ENCODE measurements at regions of chr19 and their contacts with region 1.

Region 1: GRCh38 chr19:43526884-43527859 is at the start of gene ETHE1:
- DNase-seq: peak; percentile 83
- H3K4me3 Mint-ChIP-seq: peak within 1 kb of the TSS; percentile 94
- H3K27ac Mint-ChIP-seq: peak within 1 kb of the TSS; percentile 79
- H3K4me1 Mint-ChIP-seq: peaks cover 28% of the 10 kb centered on the region
- H3K27me3 Mint-ChIP-seq: no peaks in the 10 kb centered on the region
- total RNA-seq, gene ETHE1: 90.7 to 91.1 TPM

Region 2: GRCh38 chr19:43300876-43301765 is 226.1 kb before region 1 on chr19:
- CTCF ChIA-PET with region 1: no interaction called
- POLR2A ChIA-PET with region 1: no interaction called
- DNase-seq: no peak
- H3K4me3 Mint-ChIP-seq: no peak overlapping the region
- H3K27ac Mint-ChIP-seq: no peak overlapping the region
- H3K4me1 Mint-ChIP-seq: no peaks in the 10 kb centered on the region
- H3K27me3 Mint-ChIP-seq: no peaks in the 10 kb centered on the region

Region 3: GRCh38 chr19:43425567-43426392 is 101.4 kb before region 1 on chr19:
- CTCF ChIA-PET with region 1: interaction called, 198 read pairs
- POLR2A ChIA-PET with region 1: interaction called, 3 read pairs
- DNase-seq: no peak
- H3K4me3 Mint-ChIP-seq: no peak overlapping the region
- H3K27ac Mint-ChIP-seq: no peak overlapping the region
- H3K4me1 Mint-ChIP-seq: peaks cover 12% of the 10 kb centered on the region
- H3K27me3 Mint-ChIP-seq: peaks cover 2% of the 10 kb centered on the region

Region 4: GRCh38 chr19:43489310-43489709 is 37.9 kb before region 1 on chr19:
- CTCF ChIA-PET with region 1: no interaction called
- POLR2A ChIA-PET with region 1: no interaction called
- DNase-seq: no peak
- H3K4me3 Mint-ChIP-seq: no peak overlapping the region
- H3K27ac Mint-ChIP-seq: no peak overlapping the region
- H3K4me1 Mint-ChIP-seq: no peaks in the 10 kb centered on the region
- H3K27me3 Mint-ChIP-seq: no peaks in the 10 kb centered on the region